ENCODE measurements at regions of chr11 and their contacts with region 1.

Region 1: GRCh38 chr11:95937358-95937757 is 13.5 kb upstream of the MTMR2 start:
- DNase-seq: no peak
- ATAC-seq: no peak
- H3K4me3 ChIP-seq: no peak overlapping the region
- H3K4me3 Mint-ChIP-seq: no peak overlapping the region
- H3K27ac ChIP-seq: no peak overlapping the region
- H3K27ac Mint-ChIP-seq: no peak overlapping the region
- H3K4me1 ChIP-seq: no peaks in the 10 kb centered on the region
- H3K4me1 Mint-ChIP-seq: no peaks in the 10 kb centered on the region
- H3K27me3 ChIP-seq: no peaks in the 10 kb centered on the region
- H3K27me3 Mint-ChIP-seq: no peaks in the 10 kb centered on the region
- CTCF ChIP-seq: no peak

Region 2: GRCh38 chr11:95705485-95706124 is 231.8 kb before region 1 on chr11:
- CTCF ChIA-PET with region 1: no interaction called
- POLR2A ChIA-PET with region 1: no interaction called
- intact Hi-C with region 1: no loop called
- DNase-seq: peak; percentile 76 to 93 (median 85)
- ATAC-seq: peak; percentile 92
- H3K4me3 ChIP-seq: no peak overlapping the region
- H3K4me3 Mint-ChIP-seq: no peak overlapping the region
- H3K27ac ChIP-seq: peak overlapping the region; percentile 33 to 54
- H3K27ac Mint-ChIP-seq: no peak overlapping the region
- H3K4me1 ChIP-seq: peaks cover 33% of the 10 kb centered on the region
- H3K4me1 Mint-ChIP-seq: peaks cover 11% of the 10 kb centered on the region
- H3K27me3 ChIP-seq: no peaks in the 10 kb centered on the region
- H3K27me3 Mint-ChIP-seq: no peaks in the 10 kb centered on the region
- CTCF ChIP-seq: peak; percentile 94

Region 3: DNA sequence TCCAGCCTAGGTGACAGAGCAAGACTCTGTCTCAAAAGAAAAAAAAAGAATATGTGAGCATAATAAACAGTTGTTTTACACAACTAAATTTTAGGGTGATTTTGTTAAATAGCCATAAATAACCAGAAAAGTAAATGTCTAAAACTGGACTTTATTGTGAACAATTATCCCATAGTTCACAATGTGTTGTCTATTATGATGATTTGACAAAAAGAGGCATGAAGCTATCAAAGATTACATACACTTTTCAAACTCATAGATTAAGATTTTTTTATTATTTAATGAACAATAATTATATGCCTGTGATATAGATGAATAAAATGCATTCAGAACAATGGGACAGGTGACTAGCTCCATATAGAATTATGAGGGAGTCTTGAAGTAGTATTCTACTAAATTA is 13.5 kb after region 1 on chr11:
- CTCF ChIA-PET with region 1: interaction called, 3 read pairs
- POLR2A ChIA-PET with region 1: no interaction called
- intact Hi-C with region 1: loop called in 1 of 2 experiments (anchors 1 kb)
- DNase-seq: no peak
- ATAC-seq: no peak
- H3K4me3 ChIP-seq: no peak overlapping the region
- H3K4me3 Mint-ChIP-seq: no peak overlapping the region
- H3K27ac ChIP-seq: no peak overlapping the region
- H3K27ac Mint-ChIP-seq: no peak overlapping the region
- H3K4me1 ChIP-seq: no peaks in the 10 kb centered on the region
- H3K4me1 Mint-ChIP-seq: no peaks in the 10 kb centered on the region
- H3K27me3 ChIP-seq: no peaks in the 10 kb centered on the region
- H3K27me3 Mint-ChIP-seq: no peaks in the 10 kb centered on the region
- CTCF ChIP-seq: no peak